ENCODE measurements at regions of chrX and their contacts with region 1.

Region 1: GRCh38 chrX:83008415-83008814 is 499.7 kb upstream of the POU3F4 start:
- DNase-seq: no peak
- ATAC-seq: no peak
- H3K4me3 Mint-ChIP-seq: no peak overlapping the region
- H3K27ac Mint-ChIP-seq: no peak overlapping the region
- H3K4me1 Mint-ChIP-seq: no peaks in the 10 kb centered on the region
- H3K27me3 Mint-ChIP-seq: no peaks in the 10 kb centered on the region
- CTCF ChIP-seq: no peak

Region 2: DNA sequence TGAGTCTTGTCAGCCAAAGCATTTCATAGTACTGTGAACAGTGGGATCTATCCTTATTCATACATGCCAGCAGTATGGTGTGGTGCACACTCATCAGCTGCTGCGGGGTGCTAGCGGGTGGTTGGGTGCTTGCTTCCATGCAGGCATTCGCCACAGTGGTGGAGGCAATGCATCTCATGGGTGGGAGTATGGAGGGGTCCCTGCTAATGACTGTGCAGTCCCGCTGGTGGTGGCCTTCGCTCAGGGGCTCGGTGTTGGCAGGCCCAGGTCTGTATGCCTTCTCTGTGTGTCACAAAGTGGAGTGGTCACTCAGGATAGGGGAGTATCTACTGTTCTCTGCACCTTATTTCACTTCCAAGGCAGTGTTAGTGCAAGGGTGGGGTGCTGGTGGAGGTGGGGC is 622.2 kb after region 1 on chrX:
- CTCF ChIA-PET with region 1: interaction called, 4 read pairs
- POLR2A ChIA-PET with region 1: no interaction called
- intact Hi-C with region 1: loop called (anchors 1 kb)
- DNase-seq: no peak
- ATAC-seq: no peak
- H3K4me3 Mint-ChIP-seq: no peak overlapping the region
- H3K27ac Mint-ChIP-seq: no peak overlapping the region
- H3K4me1 Mint-ChIP-seq: peaks cover 15% of the 10 kb centered on the region
- H3K27me3 Mint-ChIP-seq: no peaks in the 10 kb centered on the region
- CTCF ChIP-seq: no peak

Measured in activated B cell treated with CpG ODN at 0.5 μM for 24 hours (primary cell).